Lower lobe of right lung (tissue), 2 donors: ENCODE measurements at regions of chr15 and their contacts with region 1.

Region 1: GRCh38 chr15:98658831-98659699 is 10.7 kb downstream of the IGF1R start:
- DNase-seq: no peak
- ATAC-seq: peak; percentile 86 to 89
- H3K4me3 ChIP-seq: no peak overlapping the region
- H3K27ac ChIP-seq: no peak overlapping the region
- H3K4me1 ChIP-seq: peaks cover 30% of the 10 kb centered on the region
- H3K27me3 ChIP-seq: no peaks in the 10 kb centered on the region
- CTCF ChIP-seq: peak; percentile 75

Region 2: GRCh38 chr15:98525661-98526001 is 133.4 kb before region 1 on chr15:
- intact Hi-C with region 1: loop called (anchors 10 kb)
- DNase-seq: no peak
- ATAC-seq: peak in 1 of 2 donors; percentile 29
- H3K4me3 ChIP-seq: no peak overlapping the region
- H3K27ac ChIP-seq: no peak overlapping the region
- H3K4me1 ChIP-seq: no peaks in the 10 kb centered on the region
- H3K27me3 ChIP-seq: peaks cover 16% of the 10 kb centered on the region
- CTCF ChIP-seq: no peak